ENCODE measurements at regions of chr11 and their contacts with region 1.

Region 1: DNA sequence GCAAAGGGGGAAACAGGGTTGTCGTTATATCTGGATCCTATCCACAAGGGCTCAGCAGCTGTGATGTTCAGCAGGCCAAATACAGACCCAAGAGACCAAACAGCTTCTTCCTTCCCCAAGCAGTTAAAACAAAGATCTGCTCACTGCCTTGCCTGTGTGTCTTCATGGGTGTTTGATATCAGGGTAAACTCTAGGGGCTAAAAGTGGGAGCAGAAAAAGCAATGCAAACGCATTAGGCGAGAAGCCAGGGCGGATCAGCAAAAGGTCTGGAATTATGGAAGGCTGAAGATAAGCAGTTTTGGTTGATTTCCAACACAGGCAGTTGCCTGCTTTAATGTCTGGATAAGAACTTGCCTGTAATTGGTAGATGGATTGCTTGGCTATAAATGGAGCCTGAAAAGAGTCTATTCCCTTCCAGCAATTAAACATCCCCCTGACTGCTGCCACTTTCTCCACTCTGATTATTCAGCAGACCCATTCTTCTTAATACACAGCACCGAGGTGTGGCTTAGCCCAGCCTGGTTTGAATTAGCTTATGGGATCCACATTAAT is 126.3 kb downstream of the COMMD9 start:
- DNase-seq: peak; percentile 61
- H3K4me3 ChIP-seq: no peak overlapping the region
- H3K27ac ChIP-seq: no peak overlapping the region
- H3K4me1 ChIP-seq: peaks cover 25% of the 10 kb centered on the region
- H3K27me3 ChIP-seq: no peaks in the 10 kb centered on the region
- CTCF ChIP-seq: no peak
- POLR2A ChIP-seq: no peak

Region 2: GRCh38 chr11:36105743-36106581 is 57.0 kb before region 1 on chr11:
- CTCF ChIA-PET with region 1: no interaction called
- POLR2A ChIA-PET with region 1: no interaction called
- dilution Hi-C with region 1: no loop called
- intact Hi-C with region 1: no loop called
- DNase-seq: peak; percentile 28
- H3K4me3 ChIP-seq: no peak overlapping the region
- H3K27ac ChIP-seq: no peak overlapping the region
- H3K4me1 ChIP-seq: peaks cover 12% of the 10 kb centered on the region
- H3K27me3 ChIP-seq: no peaks in the 10 kb centered on the region
- CTCF ChIP-seq: no peak
- POLR2A ChIP-seq: no peak

Region 3: DNA sequence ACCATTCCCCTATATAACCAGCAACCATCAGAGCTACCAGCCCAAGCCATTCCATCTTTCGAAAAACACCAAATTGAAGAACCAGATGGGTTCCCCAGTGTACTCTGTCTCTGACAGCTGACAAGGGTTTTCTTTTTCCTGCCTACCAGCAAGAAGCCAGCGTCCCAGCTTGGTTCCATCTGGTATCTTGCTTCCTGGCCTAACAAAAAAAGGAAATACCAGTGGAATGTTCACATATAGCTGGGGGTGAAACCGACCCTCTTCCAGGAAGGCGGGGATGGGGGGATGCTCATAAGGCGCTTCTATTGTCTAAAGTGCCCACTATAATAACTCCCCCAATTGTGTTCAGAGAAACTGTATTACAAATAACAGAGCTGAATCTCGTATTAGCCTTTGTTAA is 46.8 kb before region 1 on chr11:
- CTCF ChIA-PET with region 1: no interaction called
- POLR2A ChIA-PET with region 1: no interaction called
- dilution Hi-C with region 1: no loop called
- intact Hi-C with region 1: loop called (anchors 2 kb)
- DNase-seq: peak; percentile 88
- H3K4me3 ChIP-seq: no peak overlapping the region
- H3K27ac ChIP-seq: peak overlapping the region; percentile 76
- H3K4me1 ChIP-seq: peaks cover 26% of the 10 kb centered on the region
- H3K27me3 ChIP-seq: no peaks in the 10 kb centered on the region
- CTCF ChIP-seq: no peak
- POLR2A ChIP-seq: no peak

Region 4: DNA sequence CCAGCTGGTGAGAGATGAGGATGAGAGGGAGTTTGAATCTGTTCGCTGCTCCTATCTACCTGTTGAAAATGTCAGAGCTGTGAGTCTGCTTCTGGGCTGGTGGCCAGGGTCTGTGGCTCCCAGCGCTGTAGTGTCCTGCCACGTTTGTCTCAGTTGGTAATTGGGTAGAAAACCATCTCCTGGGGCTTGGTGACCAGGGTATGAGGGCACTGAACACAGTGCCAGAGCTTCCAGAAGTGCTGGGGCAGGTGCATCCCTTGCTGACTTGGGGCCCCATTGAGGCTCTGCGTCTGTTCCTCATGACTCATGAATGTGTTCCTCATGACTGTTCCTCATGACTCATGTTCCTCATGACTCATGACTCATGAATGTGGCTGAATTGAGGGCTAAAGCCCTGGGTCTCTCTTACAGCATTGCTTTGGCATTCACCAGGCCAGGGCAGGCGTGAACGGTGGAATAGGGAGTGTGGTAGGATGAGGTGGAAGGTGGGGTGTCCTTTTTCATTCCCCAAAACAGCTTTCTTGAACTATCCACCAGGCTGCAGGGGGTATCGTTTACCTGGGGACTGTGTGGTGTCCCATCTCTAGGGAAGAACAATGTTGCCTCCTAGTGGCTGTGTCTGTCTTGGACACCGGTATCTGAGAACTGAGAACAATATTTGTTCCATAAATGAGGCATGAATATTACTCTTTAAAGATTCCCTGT is 13.3 kb before region 1 on chr11:
- CTCF ChIA-PET with region 1: interaction called, 6 read pairs
- POLR2A ChIA-PET with region 1: no interaction called
- dilution Hi-C with region 1: no loop called
- intact Hi-C with region 1: loop called (anchors 1 kb)
- DNase-seq: peak; percentile 99
- H3K4me3 ChIP-seq: no peak overlapping the region
- H3K27ac ChIP-seq: peak overlapping the region; percentile 93
- H3K4me1 ChIP-seq: peaks cover 25% of the 10 kb centered on the region
- H3K27me3 ChIP-seq: no peaks in the 10 kb centered on the region
- CTCF ChIP-seq: peak; percentile 43 to 50
- POLR2A ChIP-seq: peak; percentile 64

Region 5: GRCh38 chr11:36177836-36178235 is 14.9 kb after region 1 on chr11:
- CTCF ChIA-PET with region 1: interaction called, 10 read pairs
- POLR2A ChIA-PET with region 1: no interaction called
- dilution Hi-C with region 1: no loop called
- intact Hi-C with region 1: no loop called
- DNase-seq: no peak
- H3K4me3 ChIP-seq: no peak overlapping the region
- H3K27ac ChIP-seq: no peak overlapping the region
- H3K4me1 ChIP-seq: no peaks in the 10 kb centered on the region
- H3K27me3 ChIP-seq: no peaks in the 10 kb centered on the region
- CTCF ChIP-seq: no peak
- POLR2A ChIP-seq: no peak

Region 6: DNA sequence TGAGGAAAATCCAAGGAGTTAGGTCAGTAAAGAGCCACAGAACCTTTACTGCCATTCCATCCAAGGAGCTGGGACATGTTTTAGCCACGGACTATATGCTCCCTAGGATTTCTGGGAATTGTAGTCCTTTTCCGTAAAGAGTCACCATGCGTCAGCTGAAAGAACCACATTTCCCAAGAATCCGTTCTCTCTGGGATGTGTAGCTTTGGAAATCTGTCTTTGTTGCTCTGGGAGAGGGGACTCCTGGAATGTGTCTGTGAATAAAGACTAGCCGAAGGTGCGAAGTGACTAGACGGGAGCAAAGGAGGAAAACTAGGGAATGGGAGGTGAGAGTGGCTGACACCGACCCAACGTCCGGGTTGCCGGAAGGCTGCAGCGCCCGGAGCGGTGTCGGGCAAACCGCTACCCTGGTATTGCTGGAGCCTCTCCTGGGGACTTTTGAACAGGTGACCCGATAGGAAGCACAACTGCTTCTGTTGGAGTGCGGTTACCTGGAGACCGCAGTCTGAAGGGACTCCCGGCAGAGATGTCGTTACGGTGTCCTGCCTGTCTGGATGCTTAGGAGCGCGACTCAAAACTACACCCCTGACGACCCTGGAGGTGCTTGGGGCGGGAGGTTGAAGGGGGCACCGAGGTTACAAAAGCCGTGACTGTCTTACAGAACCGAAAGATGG is 431.5 kb after region 1 on chr11 and contains the start of gene IFTAP:
- CTCF ChIA-PET with region 1: no interaction called
- POLR2A ChIA-PET with region 1: no interaction called
- dilution Hi-C with region 1: no loop called
- intact Hi-C with region 1: no loop called
- DNase-seq: peak; percentile 94
- H3K4me3 ChIP-seq: peak within 1 kb of the TSS; percentile 80 to 89 (median 87)
- H3K27ac ChIP-seq: peak within 1 kb of the TSS; percentile 6
- H3K4me1 ChIP-seq: peaks cover 5% of the 10 kb centered on the region
- H3K27me3 ChIP-seq: peaks cover 4 to 18% of the 10 kb centered on the region in 2 experiments
- CTCF ChIP-seq: no peak
- POLR2A ChIP-seq: peak; percentile 44
- total RNA-seq, gene IFTAP: 19.5 and 19.6 TPM in 2 replicates